ENCODE measurements at regions of chr5 and their contacts with region 1.

Region 1: GRCh38 chr5:56460679-56461191 is 227.6 kb upstream of the ANKRD55 start:
- DNase-seq: no peak
- ATAC-seq: peak in 5 of 8 donors; percentile 12 to 49 (median 41)
- H3K4me3 ChIP-seq: no peak overlapping the region
- H3K27ac ChIP-seq: peak overlapping the region in 7 of 10 donors; percentile 13 to 76 (median 36)
- H3K4me1 ChIP-seq: peaks cover 2 to 57% (median 34%) of the 10 kb centered on the region in 9 donors
- H3K27me3 ChIP-seq: no peaks in the 10 kb centered on the region
- CTCF ChIP-seq: no peak

Region 2: GRCh38 chr5:55737793-55738192 is 722.9 kb before region 1 on chr5 and contains the start of gene DDX4:
- intact Hi-C with region 1: no loop called
- DNase-seq: no peak
- ATAC-seq: no peak
- H3K4me3 ChIP-seq: no peak within 1 kb of the TSS
- H3K27ac ChIP-seq: no peak within 1 kb of the TSS
- H3K4me1 ChIP-seq: no peaks in the 10 kb centered on the region
- H3K27me3 ChIP-seq: no peaks in the 10 kb centered on the region
- CTCF ChIP-seq: no peak
- total RNA-seq, gene DDX4: not detected

Region 3: GRCh38 chr5:56350598-56351170 is 110.1 kb before region 1 on chr5:
- intact Hi-C with region 1: loop called in 1 of 10 experiments (anchors 10 kb)
- DNase-seq: peak; percentile 73 to 74
- ATAC-seq: peak; percentile 80 to 96 (median 91)
- H3K4me3 ChIP-seq: no peak overlapping the region
- H3K27ac ChIP-seq: peak overlapping the region in 8 of 10 donors; percentile 39 to 79 (median 54)
- H3K4me1 ChIP-seq: peaks cover 0 to 52% (median 37%) of the 10 kb centered on the region in 9 donors
- H3K27me3 ChIP-seq: no peaks in the 10 kb centered on the region
- CTCF ChIP-seq: no peak